AG04449 (cell line): ENCODE measurements at regions of chr10 and their contacts with region 1.

Region 1: DNA sequence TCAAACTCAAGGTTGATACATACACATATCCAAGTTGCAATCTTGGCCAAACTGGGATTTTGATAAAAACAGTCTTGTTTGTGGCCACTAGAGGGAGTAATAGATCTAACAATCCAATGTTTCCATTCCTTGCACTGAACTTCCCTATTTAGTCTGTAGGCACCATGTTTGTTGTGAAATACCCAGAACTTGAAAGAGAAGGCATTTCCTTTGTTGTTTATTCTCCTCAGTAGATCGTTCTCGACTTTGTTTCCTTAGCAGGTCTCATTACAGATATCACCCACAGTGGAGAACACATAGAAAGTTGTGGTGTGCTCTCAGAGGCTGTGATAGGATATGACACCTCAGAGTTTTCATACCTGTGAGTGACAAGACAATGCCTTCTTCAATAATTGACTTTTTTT is 70.3 kb upstream of the MXI1 start:
- DNase-seq: peak; percentile 38
- H3K4me3 ChIP-seq: no peak overlapping the region
- CTCF ChIP-seq: peak; percentile 51

Region 2: DNA sequence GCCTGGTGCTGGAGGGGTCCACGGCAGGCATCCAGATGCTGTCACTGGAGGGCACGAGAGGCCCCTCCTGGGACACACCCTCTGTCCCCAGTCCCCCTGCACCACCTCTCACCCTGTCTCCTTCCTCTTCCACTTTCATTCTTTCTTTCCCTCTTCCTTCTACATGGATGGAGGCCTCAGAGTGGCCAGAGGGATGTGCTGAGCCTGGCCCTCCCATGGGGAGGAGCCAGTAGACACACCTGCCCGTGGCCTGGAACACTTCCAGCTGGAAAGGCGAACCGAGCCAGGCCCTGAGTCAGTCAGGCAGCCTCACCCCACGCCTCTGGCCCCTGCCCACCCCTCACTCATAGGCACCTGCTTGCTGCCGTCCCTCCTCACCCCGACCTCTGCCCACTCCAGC is 14.3 kb after region 1 on chr10:
- CTCF ChIA-PET with region 1: interaction called, 20 read pairs
- POLR2A ChIA-PET with region 1: no interaction called
- DNase-seq: no peak
- H3K4me3 ChIP-seq: no peak overlapping the region
- CTCF ChIP-seq: no peak

Region 3: DNA sequence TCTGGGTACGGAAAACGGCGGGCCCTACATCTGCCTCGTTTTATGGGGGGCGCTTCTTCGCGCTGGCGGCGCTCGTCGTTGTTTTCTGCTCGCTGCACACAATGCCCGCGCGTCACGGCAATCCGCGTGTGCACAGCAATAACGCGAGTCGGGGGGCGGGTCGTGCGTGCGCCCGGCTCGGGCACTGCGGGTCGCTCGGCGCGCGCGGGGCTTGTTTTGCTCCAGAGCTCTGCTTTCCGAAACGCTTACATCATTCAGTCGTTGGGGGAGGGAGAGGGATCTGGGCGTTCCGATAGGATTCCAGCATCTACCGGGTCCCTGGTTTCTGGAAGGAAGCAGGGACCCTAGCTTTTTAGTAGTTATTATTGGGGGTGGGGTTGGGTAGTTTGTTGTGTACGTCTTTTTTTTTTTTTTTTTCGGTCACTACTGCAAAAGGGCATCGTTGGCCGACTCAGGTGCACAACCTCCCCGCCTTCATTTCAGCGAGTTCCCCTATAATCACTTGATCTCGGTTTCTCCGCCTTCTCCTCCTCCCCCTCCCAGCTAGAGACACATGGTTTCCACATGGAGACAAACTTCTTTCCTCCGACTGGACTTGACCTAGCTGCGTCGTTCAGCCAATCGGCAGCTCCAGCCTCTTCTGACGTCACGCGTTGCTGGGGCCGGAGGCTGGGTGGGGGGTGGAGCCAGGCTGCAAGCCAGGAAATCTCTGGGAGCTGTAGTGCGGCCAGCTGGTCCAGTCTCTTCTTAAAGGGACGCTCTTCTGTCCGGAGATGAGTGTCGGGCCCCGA is 73.7 kb after region 1 on chr10:
- CTCF ChIA-PET with region 1: interaction called, 12 read pairs
- POLR2A ChIA-PET with region 1: no interaction called
- DNase-seq: peak; percentile 92
- H3K4me3 ChIP-seq: peak overlapping the region; percentile 80
- CTCF ChIP-seq: no peak

Region 4: GRCh38 chr10:110254467-110254866 is 117.3 kb after region 1 on chr10:
- CTCF ChIA-PET with region 1: interaction called, 12 read pairs
- POLR2A ChIA-PET with region 1: no interaction called
- DNase-seq: no peak
- H3K4me3 ChIP-seq: no peak overlapping the region
- CTCF ChIP-seq: no peak

Region 5: DNA sequence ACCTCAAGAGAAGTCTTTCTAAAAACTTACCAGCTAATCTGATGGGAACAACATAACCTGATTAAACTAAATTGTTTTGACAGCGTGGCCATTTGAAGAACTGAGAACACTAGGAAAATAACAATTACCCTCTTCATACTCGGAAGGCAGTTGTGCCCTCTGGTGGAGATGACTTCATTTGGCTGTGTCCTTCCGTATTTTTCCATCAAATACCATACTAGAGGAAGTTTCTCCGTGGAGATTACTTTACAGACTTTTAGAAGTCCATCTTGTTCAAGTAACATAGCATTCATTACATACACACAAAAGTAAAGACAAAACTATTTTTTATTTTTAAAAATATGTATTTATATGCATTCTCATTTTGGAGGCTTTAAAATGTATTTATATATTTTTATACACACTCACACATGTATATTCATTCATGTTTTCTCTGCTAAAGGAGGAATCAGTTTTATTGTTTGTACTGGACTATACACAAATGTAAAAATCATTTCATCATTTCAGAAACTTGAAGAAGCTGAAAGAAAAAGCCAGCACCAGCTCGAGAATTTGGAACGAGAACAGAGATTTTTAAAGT is 142.4 kb after region 1 on chr10:
- CTCF ChIA-PET with region 1: interaction called, 325 read pairs
- POLR2A ChIA-PET with region 1: no interaction called
- DNase-seq: no peak
- H3K4me3 ChIP-seq: no peak overlapping the region
- CTCF ChIP-seq: peak; percentile 73